AG04449 (cell line): ENCODE measurements at regions of chr6 and their contacts with region 1.

Region 1: GRCh38 chr6:158026054-158026900 is 44.6 kb downstream of the SYNJ2 start:
- DNase-seq: peak; percentile 84
- H3K4me3 ChIP-seq: peak overlapping the region; percentile 16
- CTCF ChIP-seq: peak; percentile 59

Region 2: DNA sequence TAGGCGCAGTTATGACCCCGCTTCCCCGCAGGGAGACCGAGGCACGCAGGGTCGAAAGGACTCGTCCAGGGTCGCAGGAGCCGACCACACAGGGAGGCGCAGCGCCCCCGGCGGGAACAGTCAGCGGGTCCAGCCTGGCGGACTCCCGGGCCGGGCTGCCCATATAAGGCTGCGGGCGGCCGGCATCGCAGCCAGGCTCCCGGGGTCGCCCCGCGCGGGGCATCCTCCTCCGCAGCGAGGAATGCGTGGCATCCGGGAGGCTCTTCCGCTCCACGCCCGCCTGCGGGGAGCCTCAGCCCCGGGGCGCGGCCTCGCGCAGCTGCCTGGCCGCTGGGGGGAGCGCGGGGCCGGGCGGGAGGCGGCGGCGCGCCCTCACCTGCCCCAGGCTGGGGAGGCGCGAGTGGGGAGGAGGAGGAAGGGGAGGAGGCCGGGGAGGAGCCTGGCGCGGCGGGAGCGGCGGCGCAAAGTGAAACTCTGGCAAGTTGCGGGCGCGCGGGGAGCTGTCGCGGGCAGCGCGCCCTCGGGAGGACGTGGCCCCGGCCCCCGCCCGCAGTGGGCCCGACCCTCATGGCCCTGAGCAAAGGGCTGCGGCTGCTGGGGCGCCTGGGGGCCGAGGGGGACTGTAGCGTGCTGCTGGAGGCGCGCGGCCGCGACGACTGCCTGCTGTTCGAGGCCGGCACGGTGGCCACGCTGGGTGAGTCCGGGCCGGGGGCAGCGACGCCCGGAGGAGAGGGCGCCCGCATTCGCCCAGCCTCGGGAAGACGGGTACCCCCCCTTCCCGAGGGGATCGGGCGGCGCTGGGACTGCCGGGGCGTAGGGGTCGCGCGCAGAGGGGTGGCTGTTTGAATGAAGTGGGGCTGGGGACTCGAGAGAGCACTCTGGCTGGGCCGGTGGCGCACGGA is 44.6 kb before region 1 on chr6 and contains the start of gene SYNJ2:
- CTCF ChIA-PET with region 1: interaction called, 12 read pairs
- POLR2A ChIA-PET with region 1: no interaction called
- DNase-seq: no peak
- H3K4me3 ChIP-seq: peak within 1 kb of the TSS; percentile 77
- CTCF ChIP-seq: peak; percentile 68

Region 3: GRCh38 chr6:157994126-157994795 is 32.0 kb before region 1 on chr6:
- CTCF ChIA-PET with region 1: interaction called, 11 read pairs
- POLR2A ChIA-PET with region 1: no interaction called
- DNase-seq: no peak
- H3K4me3 ChIP-seq: no peak overlapping the region
- CTCF ChIP-seq: no peak

Region 4: DNA sequence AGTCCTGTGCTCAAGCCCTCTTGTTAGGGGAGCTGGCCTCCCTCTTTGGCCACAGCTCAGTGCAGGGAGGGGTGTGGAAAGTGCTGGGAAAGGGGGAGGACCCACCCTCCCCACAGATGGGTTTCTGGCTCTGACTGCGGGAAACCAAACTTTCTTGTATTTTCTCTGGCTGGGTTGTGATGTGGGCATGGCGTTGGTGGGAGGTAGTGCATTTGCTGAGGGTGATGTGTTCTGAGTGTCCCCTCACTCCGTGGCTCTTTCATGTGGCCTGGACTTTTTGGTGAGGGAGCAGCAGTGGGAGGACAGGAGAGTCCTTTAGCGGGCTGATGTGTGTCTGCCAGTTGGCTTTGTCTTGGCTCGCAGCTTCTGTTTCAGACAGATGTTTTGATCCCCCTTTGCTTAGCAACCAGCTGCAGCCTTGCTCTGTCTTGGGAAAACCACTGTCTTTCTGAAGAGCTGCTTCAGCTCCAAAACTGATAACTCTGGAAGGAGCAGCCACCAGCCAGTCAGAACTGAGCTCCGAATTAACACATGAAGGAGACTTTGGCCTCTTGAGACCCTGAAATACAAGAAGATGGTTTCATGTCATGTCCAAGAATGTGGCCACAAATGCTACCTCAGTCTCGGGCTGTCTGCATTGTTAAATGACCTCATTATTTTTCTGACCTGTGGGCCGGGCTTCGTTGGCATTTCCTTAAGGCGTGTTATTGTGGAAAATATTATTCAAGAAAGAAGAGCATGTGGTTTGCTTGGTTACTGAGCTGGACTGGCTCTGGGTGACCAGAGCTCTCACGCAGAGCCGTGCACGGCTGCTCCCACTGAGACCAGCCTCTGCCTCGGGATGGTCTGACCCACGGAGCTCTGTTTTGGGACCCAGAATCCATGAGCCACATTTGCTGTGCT is 23.1 kb before region 1 on chr6:
- CTCF ChIA-PET with region 1: interaction called, 10 read pairs
- POLR2A ChIA-PET with region 1: interaction called, 15 read pairs
- DNase-seq: peak; percentile 61
- H3K4me3 ChIP-seq: peak overlapping the region; percentile 20
- CTCF ChIP-seq: no peak

Region 5: GRCh38 chr6:158009114-158009891 is 17.0 kb before region 1 on chr6:
- CTCF ChIA-PET with region 1: interaction called, 44 read pairs
- POLR2A ChIA-PET with region 1: interaction called, 8 read pairs
- DNase-seq: no peak
- H3K4me3 ChIP-seq: no peak overlapping the region
- CTCF ChIP-seq: no peak

Region 6: GRCh38 chr6:158040051-158040803 is 13.9 kb after region 1 on chr6:
- CTCF ChIA-PET with region 1: interaction called, 10 read pairs
- POLR2A ChIA-PET with region 1: interaction called, 19 read pairs
- DNase-seq: peak; percentile 95
- H3K4me3 ChIP-seq: peak overlapping the region; percentile 23; the same call in 1 of the 2 replicates
- CTCF ChIP-seq: no peak

Region 7: DNA sequence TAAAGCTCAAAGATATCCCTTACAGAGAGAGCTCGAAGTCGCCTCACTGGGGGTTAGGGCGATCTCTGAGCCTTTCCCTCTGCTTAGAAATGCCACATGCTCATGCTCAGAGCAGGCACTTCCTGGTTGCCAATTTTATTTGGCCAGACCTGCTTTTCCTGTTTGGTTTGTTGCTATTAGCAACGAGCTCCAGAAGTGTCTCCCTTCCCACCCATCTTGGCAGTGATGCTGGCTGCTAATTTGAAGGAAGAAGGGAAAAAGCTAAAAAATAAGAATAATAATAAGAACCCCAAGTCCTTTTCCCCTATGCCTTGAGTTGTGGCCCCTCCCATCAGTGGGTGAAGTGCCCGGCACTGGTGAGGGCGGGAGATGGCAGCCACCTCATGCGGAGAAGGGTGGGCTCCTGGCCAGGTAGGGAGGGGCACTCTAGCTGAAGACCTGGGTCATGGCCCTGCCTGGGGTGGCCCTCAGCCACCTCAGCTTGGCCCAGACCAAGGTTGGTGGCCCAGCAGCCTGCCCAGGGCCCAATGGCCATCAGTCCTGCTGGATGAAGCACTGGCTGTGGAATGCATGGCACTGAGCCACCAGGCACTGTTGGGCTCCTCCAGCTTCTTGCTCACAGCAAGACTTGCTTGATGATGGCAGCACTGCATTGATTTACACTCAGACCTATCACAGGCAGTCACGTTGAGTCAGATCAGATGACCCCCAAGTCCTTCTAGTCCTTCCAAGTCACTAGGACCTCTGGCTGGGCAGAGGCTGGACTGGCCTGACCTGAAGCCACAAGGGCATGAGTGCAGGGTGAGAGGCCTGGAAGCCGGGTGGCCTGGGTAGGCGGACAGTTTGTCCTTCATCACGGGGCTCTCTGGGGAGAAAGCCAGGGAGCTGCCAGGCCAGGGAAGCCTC is 34.4 kb after region 1 on chr6:
- CTCF ChIA-PET with region 1: interaction called, 14 read pairs
- POLR2A ChIA-PET with region 1: interaction called, 4 read pairs
- DNase-seq: peak; percentile 81
- H3K4me3 ChIP-seq: no peak overlapping the region
- CTCF ChIP-seq: no peak

Region 8: GRCh38 chr6:158161566-158162255 is 135.4 kb after region 1 on chr6:
- CTCF ChIA-PET with region 1: no interaction called
- POLR2A ChIA-PET with region 1: no interaction called
- DNase-seq: no peak
- H3K4me3 ChIP-seq: no peak overlapping the region
- CTCF ChIP-seq: no peak